Activated naive CD4-positive, alpha-beta T cell treated with anti-CD3 and anti-CD28 coated beads, Interleukin-2, amount 10 ng/mL, durations not matched to agents 7 days and 5 days (primary cell): ENCODE measurements at regions of chr3 and their contacts with region 1.

Region 1: DNA sequence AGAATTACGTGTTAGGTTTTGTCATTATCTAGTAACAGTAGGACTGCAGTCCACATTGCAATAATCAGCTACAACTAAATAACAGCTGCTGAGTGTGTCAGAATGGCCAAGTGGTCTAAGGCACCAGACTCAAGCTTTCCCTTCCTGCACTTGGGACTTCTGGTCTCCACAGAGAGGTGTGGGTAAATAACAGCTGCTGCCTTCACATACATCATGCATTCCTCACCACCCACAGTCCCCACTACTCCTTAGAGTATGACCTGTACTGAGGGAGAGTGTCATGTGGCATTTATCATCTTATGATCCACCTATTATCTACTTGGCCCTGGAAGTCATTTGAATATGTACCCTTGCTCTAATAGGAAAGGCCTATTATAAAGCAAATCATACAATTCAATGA is 22.2 kb upstream of the ZMAT3 start:
- DNase-seq: no peak
- H3K4me3 Mint-ChIP-seq: no peak overlapping the region
- H3K27ac Mint-ChIP-seq: no peak overlapping the region
- H3K4me1 Mint-ChIP-seq: peaks cover 14% of the 10 kb centered on the region
- H3K27me3 Mint-ChIP-seq: peaks cover 10% of the 10 kb centered on the region

Region 2: DNA sequence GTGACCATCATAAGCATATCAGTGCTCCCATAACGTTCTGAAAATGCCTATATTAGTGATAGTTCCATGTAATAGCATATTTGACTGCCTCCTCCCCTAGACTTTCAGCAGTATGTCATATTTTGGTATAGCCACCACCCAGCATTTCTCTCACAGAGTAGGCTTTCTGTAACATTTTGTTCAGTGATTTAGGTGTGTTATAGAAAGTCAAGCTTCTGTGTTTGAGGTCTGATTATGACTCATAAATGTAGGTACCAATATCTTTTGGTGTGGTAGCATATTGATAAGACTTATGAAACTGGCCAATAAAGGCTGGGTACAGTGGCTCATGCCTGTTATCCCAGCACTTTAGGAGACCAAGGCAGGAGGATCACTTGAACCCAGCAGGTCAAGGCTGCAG is 12.1 kb after region 1 on chr3:
- CTCF ChIA-PET with region 1: interaction called, 10 read pairs
- DNase-seq: no peak
- H3K4me3 Mint-ChIP-seq: no peak overlapping the region
- H3K27ac Mint-ChIP-seq: no peak overlapping the region
- H3K4me1 Mint-ChIP-seq: no peaks in the 10 kb centered on the region
- H3K27me3 Mint-ChIP-seq: no peaks in the 10 kb centered on the region